ENCODE measurements at regions of chr5 and their contacts with region 1.

Region 1: DNA sequence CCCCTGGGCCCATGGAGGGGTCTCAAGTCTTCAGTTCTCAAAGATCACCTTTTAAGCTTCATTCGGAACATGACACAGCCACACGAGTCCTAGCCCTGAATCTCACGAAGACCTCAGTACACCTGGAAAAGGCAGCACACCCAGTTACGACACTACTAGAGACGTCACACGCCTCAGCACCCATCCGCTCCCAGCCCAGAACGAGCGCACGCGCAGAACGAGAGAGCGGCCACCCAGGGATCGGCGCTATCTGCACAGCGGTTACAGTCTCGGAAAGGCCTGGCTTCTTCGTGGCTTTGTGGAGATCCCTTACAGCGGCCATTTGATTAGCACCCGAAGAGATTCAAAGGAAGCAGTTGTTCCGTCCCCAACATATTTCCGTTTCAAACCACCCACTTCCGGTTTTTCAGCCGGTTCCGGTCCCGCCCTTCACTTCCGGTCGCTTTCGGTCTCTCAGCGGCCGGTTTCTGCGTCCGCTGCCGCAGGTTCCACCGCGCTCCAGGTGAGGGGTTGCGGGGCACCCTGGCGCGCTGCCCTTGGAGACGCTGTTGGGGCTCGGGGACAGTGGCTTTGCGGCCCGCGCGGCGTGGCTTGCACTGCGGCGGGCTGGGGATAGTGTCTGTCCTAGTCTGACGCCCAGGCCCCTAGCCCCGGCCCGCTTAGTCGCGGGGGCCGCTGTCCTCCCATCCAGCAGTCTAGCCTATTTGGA is at the start of gene UBLCP1:
- DNase-seq: peak; percentile 64 to 83
- H3K4me3 ChIP-seq: peak within 1 kb of the TSS; percentile 74 to 96
- H3K27ac ChIP-seq: peak within 1 kb of the TSS; percentile 79 to 87
- H3K4me1 ChIP-seq: peaks cover 0 to 18% (median 3%) of the 10 kb centered on the region in 4 donors
- H3K27me3 ChIP-seq: no peaks in the 10 kb centered on the region
- CTCF ChIP-seq: no peak

Region 2: DNA sequence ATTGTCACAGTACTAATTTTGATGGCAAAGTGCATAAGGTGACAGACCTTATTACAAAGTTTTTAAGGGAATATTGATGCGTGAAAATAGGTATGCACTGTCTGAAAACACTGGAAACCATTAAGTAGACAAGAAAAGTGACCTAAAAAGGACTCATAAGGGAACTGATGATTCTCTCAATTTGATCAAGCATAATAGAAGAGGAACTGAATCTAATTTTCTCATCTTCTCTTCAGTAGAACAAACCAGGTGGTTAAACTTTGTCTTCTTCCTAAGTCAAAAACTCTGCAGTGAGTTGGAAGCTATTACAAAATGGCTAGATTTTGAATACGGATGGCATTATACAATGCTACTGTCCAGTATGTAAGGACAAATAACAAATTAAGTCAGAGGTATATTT is 107.1 kb before region 1 on chr5:
- intact Hi-C with region 1: loop called (anchors 2 kb)
- DNase-seq: no peak
- H3K4me3 ChIP-seq: no peak overlapping the region
- H3K27ac ChIP-seq: no peak overlapping the region
- H3K4me1 ChIP-seq: no peaks in the 10 kb centered on the region
- H3K27me3 ChIP-seq: no peaks in the 10 kb centered on the region
- CTCF ChIP-seq: no peak

Region 3: GRCh38 chr5:159209438-159210305 is 53.3 kb before region 1 on chr5 and contains the start of gene RNF145:
- intact Hi-C with region 1: loop called (anchors 2 kb)
- DNase-seq: peak; percentile 78 to 89
- H3K4me3 ChIP-seq: peak within 1 kb of the TSS; percentile 90 to 99
- H3K27ac ChIP-seq: peak within 1 kb of the TSS; percentile 89 to 96
- H3K4me1 ChIP-seq: peaks cover 0 to 31% (median 17%) of the 10 kb centered on the region in 4 donors
- H3K27me3 ChIP-seq: no peaks in the 10 kb centered on the region
- CTCF ChIP-seq: no peak

Region 4: DNA sequence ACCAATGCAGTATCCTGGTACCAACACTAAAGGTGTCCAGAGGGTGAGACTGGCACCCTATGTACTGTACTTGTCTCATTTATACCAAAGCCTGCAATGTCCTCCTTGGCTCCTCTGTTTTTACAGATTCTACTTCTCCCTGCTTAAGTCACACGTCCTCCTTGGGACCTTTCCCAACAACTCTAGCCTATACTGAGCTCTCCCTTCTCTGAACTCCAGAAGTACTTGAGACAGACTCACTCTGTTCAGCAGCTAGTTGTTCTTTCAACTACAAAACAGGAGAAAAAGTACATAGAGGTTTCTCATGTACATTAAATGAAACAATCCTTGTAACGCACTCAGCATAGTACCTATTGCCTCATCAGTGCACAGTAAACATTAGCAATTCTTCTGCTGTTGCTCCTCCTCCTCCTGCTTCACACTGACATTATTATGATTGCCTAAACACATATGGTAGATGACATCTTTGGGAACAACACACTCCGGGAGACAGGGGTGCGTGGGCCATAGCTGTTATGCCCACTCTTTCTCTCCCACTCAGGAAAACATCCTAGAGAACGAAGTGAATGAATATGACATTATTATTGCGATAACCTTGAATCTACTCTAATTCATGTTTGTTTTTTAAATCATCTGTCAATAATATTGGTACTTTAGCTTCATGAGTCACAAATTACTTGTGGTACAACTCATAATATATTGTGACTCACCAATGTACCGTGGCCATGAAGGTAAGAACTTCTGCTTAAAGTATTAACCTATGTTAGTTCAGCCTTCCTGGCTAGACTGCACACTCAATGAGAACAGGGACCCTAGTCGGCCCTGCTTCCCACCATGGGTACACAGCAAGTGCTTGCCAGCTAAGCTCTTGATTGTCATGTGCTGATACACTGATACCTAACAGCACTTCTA is 473.0 kb after region 1 on chr5:
- intact Hi-C with region 1: no loop called
- DNase-seq: no peak
- H3K4me3 ChIP-seq: no peak overlapping the region
- H3K27ac ChIP-seq: no peak overlapping the region
- H3K4me1 ChIP-seq: peaks cover 0 to 11% (median 5%) of the 10 kb centered on the region in 4 donors
- H3K27me3 ChIP-seq: no peaks in the 10 kb centered on the region
- CTCF ChIP-seq: no peak

Measured in tibial artery (tissue), 4 donors.